AG04449 (cell line): ENCODE measurements at regions of chr4 and their contacts with region 1.

Region 1: DNA sequence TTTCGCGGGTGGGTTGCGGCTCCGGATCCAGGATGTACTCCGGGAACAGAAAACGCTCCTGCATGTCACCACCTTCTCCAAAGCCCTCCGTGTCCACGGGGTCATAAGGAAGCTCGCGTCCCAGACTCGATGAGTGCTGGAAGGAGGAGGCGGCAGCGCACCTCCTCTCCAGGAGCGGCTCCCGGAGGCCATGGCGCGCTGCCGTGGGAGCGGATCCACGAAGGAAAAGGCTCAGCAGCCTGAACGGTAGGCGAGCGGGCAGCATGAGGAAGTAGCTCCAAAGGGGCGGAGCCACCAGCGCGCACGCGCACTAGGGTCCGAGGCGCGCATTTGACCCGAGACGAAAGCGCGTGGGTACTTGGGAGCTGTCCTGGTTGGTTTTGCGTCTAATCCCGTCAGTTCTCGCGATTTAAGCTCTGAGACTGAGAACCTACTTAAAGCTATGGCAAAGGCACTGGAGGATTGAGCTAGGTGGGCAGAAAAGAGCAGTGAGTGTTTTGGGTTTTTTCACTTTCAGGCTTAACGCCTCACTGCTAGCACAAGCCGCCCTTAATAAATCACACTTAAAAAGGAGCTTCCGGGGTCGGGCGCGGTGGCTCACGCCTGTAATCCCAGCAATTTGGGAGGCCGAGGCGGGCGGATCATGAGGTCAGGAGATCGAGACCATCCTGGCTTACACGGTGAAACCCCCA is at the start of gene NOA1:
- DNase-seq: peak; percentile 95
- H3K4me3 ChIP-seq: peak within 1 kb of the TSS; percentile 99
- CTCF ChIP-seq: no peak

Region 2: GRCh38 chr4:56728512-56728911 is 249.0 kb before region 1 on chr4:
- CTCF ChIA-PET with region 1: no interaction called
- POLR2A ChIA-PET with region 1: no interaction called
- DNase-seq: peak; percentile 87
- H3K4me3 ChIP-seq: no peak overlapping the region
- CTCF ChIP-seq: no peak

Region 3: GRCh38 chr4:56907489-56908205 is 69.8 kb before region 1 on chr4 and contains the start of gene REST:
- CTCF ChIA-PET with region 1: no interaction called
- POLR2A ChIA-PET with region 1: interaction called, 20 read pairs
- DNase-seq: no peak
- H3K4me3 ChIP-seq: peak within 1 kb of the TSS; percentile 89
- CTCF ChIP-seq: no peak

Region 4: GRCh38 chr4:56959100-56959499 is 18.4 kb before region 1 on chr4:
- CTCF ChIA-PET with region 1: interaction called, 13 read pairs
- POLR2A ChIA-PET with region 1: interaction called, 4 read pairs
- DNase-seq: no peak
- H3K4me3 ChIP-seq: no peak overlapping the region
- CTCF ChIP-seq: no peak

Region 5: DNA sequence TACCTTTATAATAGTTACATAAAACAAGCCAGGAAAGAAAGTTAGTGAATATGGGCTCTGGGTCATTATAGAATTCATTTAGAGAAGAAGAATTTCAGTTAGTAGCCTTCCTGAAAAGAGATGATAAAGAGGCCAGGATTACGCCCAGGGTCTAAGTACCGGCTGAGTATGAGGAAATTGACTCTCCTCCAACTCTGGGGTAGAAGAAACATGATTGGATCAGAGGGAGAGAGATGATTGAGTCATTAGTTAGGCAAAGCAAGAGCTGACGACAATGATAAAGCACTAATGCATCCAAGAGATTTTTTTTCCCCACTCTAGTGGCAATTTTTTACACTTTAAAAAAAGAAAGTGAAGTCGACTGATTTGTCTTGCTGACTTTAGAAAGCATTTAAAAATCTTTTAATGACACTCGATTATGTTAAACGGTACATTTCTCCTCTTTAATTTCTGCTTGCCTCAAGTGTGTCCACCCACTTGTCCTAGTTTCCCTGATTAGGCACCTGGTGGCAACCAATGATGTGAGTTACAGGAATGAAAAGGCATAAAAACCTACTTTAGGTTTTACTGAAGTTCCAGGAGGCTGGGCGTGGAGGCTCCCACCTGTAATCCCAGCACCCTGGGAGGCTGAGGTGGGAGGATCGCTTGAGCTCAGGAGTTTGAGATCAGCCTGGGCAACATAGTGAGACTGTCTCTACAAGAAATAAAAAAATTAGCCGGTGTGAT is 170.0 kb after region 1 on chr4:
- CTCF ChIA-PET with region 1: no interaction called
- POLR2A ChIA-PET with region 1: no interaction called
- DNase-seq: peak; percentile 71
- H3K4me3 ChIP-seq: no peak overlapping the region
- CTCF ChIP-seq: no peak